OCI-LY7 (cell line): ENCODE measurements at regions of chr7 and their contacts with region 1.

Region 1: DNA sequence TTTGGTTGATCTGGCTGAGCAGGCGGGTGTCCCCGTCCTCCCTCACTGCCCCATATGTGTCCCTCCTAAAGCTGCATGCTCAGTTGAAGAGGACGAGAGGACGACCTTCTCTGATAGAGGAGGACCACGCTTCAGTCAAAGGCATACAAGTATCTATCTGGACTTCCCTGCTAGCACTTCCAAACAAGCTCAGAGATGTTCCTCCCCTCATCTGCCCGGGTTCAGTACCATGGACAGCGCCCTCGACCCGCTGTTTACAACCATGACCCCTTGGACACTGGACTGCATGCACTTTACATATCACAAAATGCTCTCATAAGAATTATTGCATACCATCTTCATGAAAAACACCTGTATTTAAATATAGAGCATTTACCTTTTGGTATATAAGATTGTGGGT is 26.9 kb upstream of the TRIM56 start:
- DNase-seq: peak; percentile 45
- H3K4me3 ChIP-seq: no peak overlapping the region
- H3K27ac ChIP-seq: no peak overlapping the region
- H3K4me1 ChIP-seq: no peaks in the 10 kb centered on the region
- CTCF ChIP-seq: no peak

Region 2: GRCh38 chr7:100896732-100897608 is 161.4 kb before region 1 on chr7:
- CTCF ChIA-PET with region 1: interaction called, 3 read pairs
- POLR2A ChIA-PET with region 1: no interaction called
- intact Hi-C with region 1: loop called (anchors 1 kb)
- DNase-seq: peak; percentile 27
- H3K4me3 ChIP-seq: no peak overlapping the region
- H3K27ac ChIP-seq: no peak overlapping the region
- H3K4me1 ChIP-seq: peaks cover 6% of the 10 kb centered on the region
- CTCF ChIP-seq: peak; percentile 74

Region 3: DNA sequence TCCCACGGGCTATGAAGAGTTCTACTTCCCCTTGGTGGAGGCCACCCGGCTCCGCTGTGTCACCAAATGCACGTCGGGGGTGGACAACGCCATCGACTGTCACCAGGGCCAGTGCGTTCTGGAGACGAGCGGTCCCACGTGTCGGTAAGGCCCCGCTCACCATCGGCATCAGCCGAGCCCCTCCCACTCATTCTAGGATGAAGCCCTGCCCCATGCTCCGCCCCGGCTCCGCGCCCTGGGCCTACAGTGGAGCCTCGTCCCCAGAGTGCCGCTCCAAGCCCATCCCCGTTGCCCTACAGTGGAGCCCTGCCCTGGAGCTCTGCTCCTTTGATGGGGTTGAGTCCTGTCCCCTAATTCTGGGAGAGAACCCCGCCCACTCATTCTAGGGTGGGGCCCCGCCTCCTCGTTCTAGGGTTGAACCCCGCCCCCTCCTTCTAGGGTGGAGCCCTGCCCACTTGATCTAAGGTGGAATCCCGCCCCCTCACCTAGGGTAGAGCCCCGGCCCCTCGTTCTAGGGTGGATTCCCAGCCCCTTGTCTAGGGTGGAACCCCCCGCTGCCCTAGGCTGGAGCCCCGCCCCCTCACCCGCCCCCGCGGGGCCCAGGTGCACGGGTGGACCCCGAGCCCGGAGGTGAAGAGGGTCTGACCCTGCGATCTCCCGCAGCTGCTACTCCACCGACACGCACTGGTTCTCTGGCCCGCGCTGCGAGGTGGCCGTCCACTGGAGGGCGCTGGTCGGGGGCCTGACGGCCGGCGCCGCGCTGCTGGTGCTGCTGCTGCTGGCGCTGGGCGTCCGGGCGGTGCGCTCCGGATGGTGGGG is 92.4 kb before region 1 on chr7:
- CTCF ChIA-PET with region 1: no interaction called
- POLR2A ChIA-PET with region 1: no interaction called
- intact Hi-C with region 1: loop called (anchors 5 kb)
- DNase-seq: peak; percentile 40
- H3K4me3 ChIP-seq: peak overlapping the region; percentile 5
- H3K27ac ChIP-seq: no peak overlapping the region
- H3K4me1 ChIP-seq: peaks cover 4% of the 10 kb centered on the region
- CTCF ChIP-seq: peak; percentile 77